GM12878 (cell line): ENCODE measurements at regions of chr6 and their contacts with region 1.

Region 1: DNA sequence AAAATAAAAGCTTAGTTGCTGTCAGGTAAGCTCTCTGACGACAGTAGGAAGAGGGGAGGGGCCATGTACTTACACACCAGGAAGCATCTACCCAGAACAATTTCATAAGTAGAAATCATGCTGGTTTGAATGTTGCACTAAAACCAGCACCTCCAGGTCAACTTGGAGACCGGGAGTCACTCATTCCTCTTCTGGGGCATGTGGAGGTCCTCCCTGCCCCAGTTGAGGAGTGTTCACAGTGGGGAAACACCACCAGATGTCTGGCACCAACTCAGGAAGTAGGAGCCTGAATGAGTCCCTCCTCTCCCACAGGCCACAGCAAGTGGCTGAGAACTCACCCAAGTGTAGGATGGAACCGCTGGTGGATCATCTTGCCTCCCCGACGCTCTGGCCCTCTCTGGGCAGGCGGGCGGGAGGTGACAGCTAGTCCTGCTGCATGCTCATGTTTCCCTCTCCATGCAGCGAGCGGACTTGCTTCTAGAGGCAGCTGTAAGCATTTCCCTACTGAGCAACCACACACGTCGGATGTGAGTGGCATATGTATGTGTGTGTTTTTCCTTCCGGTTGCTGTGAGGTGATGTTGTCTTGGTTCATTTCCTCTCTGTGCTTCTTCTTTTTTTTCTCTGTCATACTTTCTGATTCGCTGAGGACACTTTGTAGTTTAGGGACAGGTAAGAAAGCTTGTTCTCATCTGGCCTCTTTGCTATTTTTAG is 149.5 kb upstream of the NEDD9 start:
- DNase-seq: peak; percentile 92
- ATAC-seq: peak; percentile 77
- H3K4me3 ChIP-seq: peak overlapping the region; percentile 72
- H3K27ac ChIP-seq: peak overlapping the region; percentile 90
- H3K4me1 ChIP-seq: peaks cover 24% of the 10 kb centered on the region
- H3K27me3 ChIP-seq: no peaks in the 10 kb centered on the region
- CTCF ChIP-seq: no peak
- EP300 ChIP-seq: no peak; a peak in 1 of 4 replicates
- POLR2A ChIP-seq: peak; percentile 92
- RAD21 ChIP-seq: 0 out of 2 replicates have a peak, but pooled peaks have one; percentile 5

Region 2: GRCh38 chr6:11144393-11144851 is 237.5 kb before region 1 on chr6:
- CTCF ChIA-PET with region 1: interaction called, 7 read pairs
- POLR2A ChIA-PET with region 1: no interaction called
- RAD21 ChIA-PET with region 1: interaction called, 5 read pairs
- SMC1A ChIA-PET with region 1: interaction called, 11 read pairs
- in situ Hi-C with region 1: no loop called
- intact Hi-C with region 1: no loop called
- DNase-seq: peak; percentile 49
- ATAC-seq: peak; percentile 99
- H3K4me3 ChIP-seq: no peak overlapping the region
- H3K27ac ChIP-seq: no peak overlapping the region
- H3K4me1 ChIP-seq: peaks cover 3% of the 10 kb centered on the region; the same call in 1 of the 2 replicates
- H3K27me3 ChIP-seq: no peaks in the 10 kb centered on the region
- CTCF ChIP-seq: peak; percentile 93 to 97 (median 95)
- EP300 ChIP-seq: no peak
- POLR2A ChIP-seq: no peak
- RAD21 ChIP-seq: peak; percentile 100

Region 3: GRCh38 chr6:11232193-11232769 is 149.7 kb before region 1 on chr6 and contains the start of gene NEDD9:
- CTCF ChIA-PET with region 1: interaction called, 4 read pairs
- POLR2A ChIA-PET with region 1: interaction called, 5 read pairs
- RAD21 ChIA-PET with region 1: interaction called, 38 read pairs
- SMC1A ChIA-PET with region 1: interaction called, 56 read pairs
- in situ Hi-C with region 1: no loop called
- intact Hi-C with region 1: no loop called
- DNase-seq: peak; percentile 86
- ATAC-seq: peak; percentile 98
- H3K4me3 ChIP-seq: peak within 1 kb of the TSS; percentile 84
- H3K27ac ChIP-seq: peak within 1 kb of the TSS; percentile 66
- H3K4me1 ChIP-seq: peaks cover 10% of the 10 kb centered on the region; the same call in 1 of the 2 replicates
- H3K27me3 ChIP-seq: no peaks in the 10 kb centered on the region
- CTCF ChIP-seq: no peak
- EP300 ChIP-seq: no peak
- POLR2A ChIP-seq: peak; percentile 96
- RAD21 ChIP-seq: no peak
- polyA plus RNA-seq, gene NEDD9: 4.9 to 6.3 TPM

Region 4: DNA sequence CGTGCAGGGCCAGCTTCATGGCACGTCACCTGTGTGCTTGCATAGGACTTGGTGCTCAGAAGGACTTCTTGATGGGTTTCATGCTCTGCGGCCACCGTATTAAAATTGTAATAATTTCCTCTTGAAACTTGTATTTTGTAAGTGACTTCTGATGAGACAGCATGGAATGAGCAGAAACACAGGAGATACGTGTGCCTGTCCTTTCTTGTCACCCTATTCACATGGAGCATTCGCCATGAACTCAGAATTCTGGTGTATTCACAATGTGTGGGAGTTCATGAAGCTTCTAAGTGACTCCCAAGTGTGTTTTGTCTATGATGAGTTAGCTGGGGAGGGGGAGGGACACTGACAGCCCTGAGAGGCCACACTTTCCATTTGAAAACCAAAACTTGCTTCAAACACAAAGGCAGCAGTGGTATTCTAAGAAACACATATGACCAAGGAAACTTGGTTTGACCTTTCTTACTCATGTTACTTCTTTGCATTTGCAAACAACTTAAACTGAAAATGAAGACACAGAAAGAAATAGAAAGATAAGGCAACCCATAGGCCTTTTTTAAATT is 57.4 kb before region 1 on chr6:
- CTCF ChIA-PET with region 1: interaction called, 11 read pairs
- POLR2A ChIA-PET with region 1: interaction called, 20 read pairs
- RAD21 ChIA-PET with region 1: interaction called, 118 read pairs
- SMC1A ChIA-PET with region 1: interaction called, 109 read pairs
- in situ Hi-C with region 1: no loop called
- intact Hi-C with region 1: loop called (anchors 2 kb)
- DNase-seq: peak; percentile 61
- ATAC-seq: peak; percentile 71
- H3K4me3 ChIP-seq: no peak overlapping the region
- H3K27ac ChIP-seq: peak overlapping the region; percentile 45
- H3K4me1 ChIP-seq: peaks cover 41% of the 10 kb centered on the region
- H3K27me3 ChIP-seq: no peaks in the 10 kb centered on the region
- CTCF ChIP-seq: no peak
- EP300 ChIP-seq: peak; percentile 57 to 76; a peak in 2 of 4 replicates
- POLR2A ChIP-seq: no peak
- RAD21 ChIP-seq: 0 out of 2 replicates have a peak, but pooled peaks have one; percentile 13

Region 5: DNA sequence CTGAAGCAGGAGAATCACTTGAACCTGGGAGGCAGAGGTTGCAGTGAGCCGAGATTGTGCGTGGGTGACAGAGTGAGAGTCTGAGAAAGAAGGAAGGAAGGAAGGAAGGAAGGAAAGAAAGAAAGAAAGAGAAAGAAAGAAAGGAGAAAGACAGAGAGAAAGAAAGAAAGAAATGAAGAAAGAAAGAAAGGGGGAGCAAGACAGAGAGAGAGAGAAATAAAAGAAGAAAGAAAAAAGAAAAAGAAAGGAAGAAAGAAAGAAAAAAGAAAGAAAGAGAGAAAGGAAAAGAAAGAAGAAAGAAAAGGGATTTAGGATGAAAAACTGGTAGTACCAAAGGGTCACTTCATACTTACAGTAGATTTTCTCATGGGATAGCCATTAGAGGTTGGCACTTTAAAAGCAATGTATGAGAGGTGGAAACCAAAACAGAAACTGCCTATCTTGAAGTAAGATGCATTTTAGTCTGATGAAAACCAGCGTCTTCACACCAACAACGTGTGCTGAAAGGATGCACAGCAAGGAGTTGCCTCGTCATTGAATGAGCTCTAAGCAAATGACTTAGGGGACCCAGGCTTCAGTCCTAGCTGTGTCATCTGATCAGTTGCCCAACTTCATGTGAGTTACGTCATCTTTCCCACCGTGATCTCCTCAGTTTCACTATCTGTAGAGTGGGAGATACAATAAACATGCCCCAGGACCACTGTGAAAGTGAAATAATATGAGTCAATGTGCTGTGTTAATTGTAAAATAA is 15.6 kb before region 1 on chr6:
- CTCF ChIA-PET with region 1: interaction called, 72 read pairs
- POLR2A ChIA-PET with region 1: interaction called, 39 read pairs
- RAD21 ChIA-PET with region 1: interaction called, 221 read pairs
- SMC1A ChIA-PET with region 1: interaction called, 275 read pairs
- in situ Hi-C with region 1: no loop called
- intact Hi-C with region 1: no loop called
- DNase-seq: peak; percentile 89
- ATAC-seq: peak; percentile 86
- H3K4me3 ChIP-seq: peak overlapping the region; percentile 15; the same call in 1 of the 2 replicates
- H3K27ac ChIP-seq: peak overlapping the region; percentile 78
- H3K4me1 ChIP-seq: peaks cover 64% of the 10 kb centered on the region
- H3K27me3 ChIP-seq: no peaks in the 10 kb centered on the region
- CTCF ChIP-seq: no peak
- EP300 ChIP-seq: 0 out of 4 replicates have a peak, but pooled peaks of 1 of the 2 experiments have one; percentile 12
- POLR2A ChIP-seq: peak; percentile 45; the same call in 1 of the 2 replicates
- RAD21 ChIP-seq: no peak

Region 6: GRCh38 chr6:11445146-11445545 is 63.2 kb after region 1 on chr6:
- CTCF ChIA-PET with region 1: interaction called, 4 read pairs
- POLR2A ChIA-PET with region 1: interaction called, 6 read pairs
- RAD21 ChIA-PET with region 1: interaction called, 22 read pairs
- SMC1A ChIA-PET with region 1: interaction called, 35 read pairs
- in situ Hi-C with region 1: no loop called
- intact Hi-C with region 1: no loop called
- DNase-seq: no peak
- ATAC-seq: peak; percentile 23
- H3K4me3 ChIP-seq: no peak overlapping the region
- H3K27ac ChIP-seq: peak overlapping the region; percentile 27
- H3K4me1 ChIP-seq: peaks cover 3% of the 10 kb centered on the region; the same call in 1 of the 2 replicates
- H3K27me3 ChIP-seq: no peaks in the 10 kb centered on the region
- CTCF ChIP-seq: no peak
- EP300 ChIP-seq: no peak
- POLR2A ChIP-seq: no peak
- RAD21 ChIP-seq: no peak

Region 7: DNA sequence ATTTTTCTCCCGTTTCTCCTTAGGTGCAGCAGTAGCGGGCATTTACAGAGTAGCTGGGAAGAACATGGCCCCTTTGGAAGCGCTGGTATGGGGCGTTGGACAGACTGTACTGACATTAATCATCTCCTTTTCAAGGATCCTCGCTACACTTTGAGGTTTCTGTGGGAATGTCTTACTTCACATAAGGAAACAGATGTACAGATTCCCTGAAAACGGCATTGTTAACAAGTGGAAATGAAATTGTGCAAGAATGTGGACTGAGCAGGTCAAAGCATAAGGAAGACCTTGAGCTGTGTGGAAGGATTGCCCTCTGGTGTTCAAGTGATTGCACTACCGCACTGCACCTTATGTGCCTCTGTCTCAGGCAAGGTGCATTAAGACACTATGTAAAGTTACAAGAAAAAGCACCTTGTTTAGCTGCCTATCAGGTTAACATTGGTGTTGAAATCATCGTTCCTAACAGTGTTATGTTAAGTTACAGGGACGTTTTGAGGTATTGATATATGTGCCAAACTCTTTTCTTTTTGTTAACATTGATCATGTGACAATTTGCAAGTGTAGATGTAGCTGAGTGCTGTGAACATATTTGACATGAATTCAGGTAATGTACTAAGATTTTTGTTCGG is 193.6 kb after region 1 on chr6:
- CTCF ChIA-PET with region 1: no interaction called
- POLR2A ChIA-PET with region 1: no interaction called
- RAD21 ChIA-PET with region 1: no interaction called
- SMC1A ChIA-PET with region 1: interaction called, 7 read pairs
- in situ Hi-C with region 1: no loop called
- intact Hi-C with region 1: loop called (anchors 5 kb)
- DNase-seq: peak; percentile 74
- ATAC-seq: peak; percentile 100
- H3K4me3 ChIP-seq: no peak overlapping the region
- H3K27ac ChIP-seq: no peak overlapping the region
- H3K4me1 ChIP-seq: no peaks in the 10 kb centered on the region; the same call in 1 of the 2 replicates
- H3K27me3 ChIP-seq: no peaks in the 10 kb centered on the region
- CTCF ChIP-seq: peak; percentile 92 to 99 (median 97); a peak in 5 of 6 replicates
- EP300 ChIP-seq: no peak
- POLR2A ChIP-seq: no peak
- RAD21 ChIP-seq: peak; percentile 97

Region 8: DNA sequence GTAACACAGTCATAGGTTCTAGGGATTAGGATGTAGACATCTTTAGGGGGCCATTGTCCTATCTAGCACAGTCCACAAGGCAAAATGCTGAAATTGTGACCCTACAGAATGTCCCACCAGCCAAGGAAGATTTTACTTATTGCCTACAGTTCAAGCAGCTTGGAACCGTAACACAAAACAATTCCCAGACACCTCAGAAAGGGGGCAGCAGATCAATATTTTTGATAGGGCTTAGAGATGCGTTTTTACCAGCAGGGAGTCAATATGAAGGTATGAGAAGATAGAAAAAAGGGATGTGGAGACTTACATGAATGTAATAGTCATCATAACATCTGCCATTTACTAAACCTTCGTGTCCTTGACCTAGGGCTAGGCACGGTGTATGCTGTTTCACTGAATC is 236.6 kb after region 1 on chr6:
- CTCF ChIA-PET with region 1: no interaction called
- POLR2A ChIA-PET with region 1: no interaction called
- RAD21 ChIA-PET with region 1: no interaction called
- SMC1A ChIA-PET with region 1: no interaction called
- in situ Hi-C with region 1: no loop called
- intact Hi-C with region 1: no loop called
- DNase-seq: peak; percentile 13
- ATAC-seq: peak; percentile 92
- H3K4me3 ChIP-seq: no peak overlapping the region
- H3K27ac ChIP-seq: no peak overlapping the region
- H3K4me1 ChIP-seq: no peaks in the 10 kb centered on the region
- H3K27me3 ChIP-seq: no peaks in the 10 kb centered on the region
- CTCF ChIP-seq: peak; percentile 36 to 53 (median 51)
- EP300 ChIP-seq: no peak
- POLR2A ChIP-seq: no peak
- RAD21 ChIP-seq: peak; percentile 67; the same call in 1 of the 2 replicates